GM12878 (cell line): ENCODE measurements at regions of chr12 and their contacts with region 1.

Region 1: GRCh38 chr12:14782756-14783155 is 20.5 kb downstream of the WBP11 start:
- DNase-seq: no peak
- ATAC-seq: peak; percentile 74
- H3K4me3 ChIP-seq: no peak overlapping the region
- H3K27ac ChIP-seq: no peak overlapping the region
- H3K4me1 ChIP-seq: no peaks in the 10 kb centered on the region
- H3K27me3 ChIP-seq: no peaks in the 10 kb centered on the region
- CTCF ChIP-seq: no peak
- EP300 ChIP-seq: no peak
- POLR2A ChIP-seq: no peak
- RAD21 ChIP-seq: no peak

Region 2: DNA sequence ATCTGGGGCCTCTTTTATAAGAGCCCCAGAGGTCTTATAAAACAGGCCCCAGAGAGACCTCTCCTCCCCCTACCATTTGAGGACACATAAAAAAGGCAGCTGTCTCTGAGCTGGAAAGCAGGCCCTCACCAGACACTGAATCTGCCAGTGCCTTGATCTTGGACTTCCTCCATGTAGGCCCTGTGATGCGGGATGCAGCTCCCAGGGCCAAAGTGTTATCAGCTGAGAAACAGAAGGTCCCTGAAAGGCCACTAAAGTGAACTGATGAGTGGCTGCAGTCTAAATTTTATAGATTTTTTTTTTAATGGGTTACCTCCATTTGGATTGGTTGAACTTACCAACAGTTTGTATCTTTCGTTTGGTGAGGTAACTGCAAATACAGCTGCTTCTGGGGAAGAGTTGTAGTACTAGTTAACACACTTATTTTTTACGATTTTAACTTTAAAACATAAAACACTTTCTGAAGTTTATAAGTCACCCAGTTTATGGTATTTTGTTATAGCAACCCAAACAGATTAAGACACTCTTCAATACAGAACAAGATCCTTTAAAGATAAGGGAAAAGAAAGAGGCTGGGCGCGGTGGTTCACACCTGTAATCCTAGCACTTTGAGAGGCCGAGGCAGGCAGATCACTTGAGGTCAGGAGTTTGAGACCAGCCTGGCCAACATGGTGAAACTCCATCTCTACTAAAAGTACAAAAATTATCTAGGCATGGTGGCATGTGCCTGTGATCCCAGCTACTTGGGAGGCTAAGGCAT is 80.8 kb before region 1 on chr12:
- CTCF ChIA-PET with region 1: no interaction called
- POLR2A ChIA-PET with region 1: no interaction called
- RAD21 ChIA-PET with region 1: no interaction called
- SMC1A ChIA-PET with region 1: no interaction called
- in situ Hi-C with region 1: no loop called
- intact Hi-C with region 1: no loop called
- DNase-seq: no peak
- ATAC-seq: no peak
- H3K4me3 ChIP-seq: no peak overlapping the region
- H3K27ac ChIP-seq: no peak overlapping the region
- H3K4me1 ChIP-seq: no peaks in the 10 kb centered on the region
- H3K27me3 ChIP-seq: no peaks in the 10 kb centered on the region
- CTCF ChIP-seq: no peak
- EP300 ChIP-seq: no peak
- POLR2A ChIP-seq: no peak
- RAD21 ChIP-seq: no peak

Region 3: DNA sequence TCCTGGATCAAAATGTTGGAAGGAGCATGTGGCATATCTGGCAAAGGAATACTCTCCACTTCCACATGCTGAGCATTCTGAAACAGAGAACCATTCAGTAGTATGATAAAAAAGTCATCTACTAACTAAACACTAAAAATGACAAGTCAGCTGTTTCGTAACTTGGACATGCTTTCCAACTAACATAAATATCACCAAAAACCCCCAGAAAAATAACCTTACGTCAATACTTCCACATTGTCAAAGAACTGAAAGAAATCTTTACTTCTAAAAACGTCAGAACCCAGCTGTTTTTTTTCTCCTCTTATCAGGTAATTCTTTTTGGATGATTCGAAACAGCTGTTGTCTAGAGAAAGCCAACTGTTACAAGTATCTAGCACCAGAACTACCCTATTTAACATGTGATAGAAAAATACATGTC is 12.3 kb after region 1 on chr12:
- CTCF ChIA-PET with region 1: interaction called, 8 read pairs
- POLR2A ChIA-PET with region 1: interaction called, 3 read pairs
- RAD21 ChIA-PET with region 1: interaction called, 89 read pairs
- SMC1A ChIA-PET with region 1: interaction called, 13 read pairs
- in situ Hi-C with region 1: no loop called
- intact Hi-C with region 1: no loop called
- DNase-seq: no peak
- ATAC-seq: peak; percentile 65
- H3K4me3 ChIP-seq: no peak overlapping the region
- H3K27ac ChIP-seq: no peak overlapping the region
- H3K4me1 ChIP-seq: no peaks in the 10 kb centered on the region
- H3K27me3 ChIP-seq: no peaks in the 10 kb centered on the region
- CTCF ChIP-seq: no peak
- EP300 ChIP-seq: peak in 1 of 2 experiments; percentile 20; a peak in 1 of 4 replicates
- POLR2A ChIP-seq: no peak
- RAD21 ChIP-seq: no peak

Region 4: DNA sequence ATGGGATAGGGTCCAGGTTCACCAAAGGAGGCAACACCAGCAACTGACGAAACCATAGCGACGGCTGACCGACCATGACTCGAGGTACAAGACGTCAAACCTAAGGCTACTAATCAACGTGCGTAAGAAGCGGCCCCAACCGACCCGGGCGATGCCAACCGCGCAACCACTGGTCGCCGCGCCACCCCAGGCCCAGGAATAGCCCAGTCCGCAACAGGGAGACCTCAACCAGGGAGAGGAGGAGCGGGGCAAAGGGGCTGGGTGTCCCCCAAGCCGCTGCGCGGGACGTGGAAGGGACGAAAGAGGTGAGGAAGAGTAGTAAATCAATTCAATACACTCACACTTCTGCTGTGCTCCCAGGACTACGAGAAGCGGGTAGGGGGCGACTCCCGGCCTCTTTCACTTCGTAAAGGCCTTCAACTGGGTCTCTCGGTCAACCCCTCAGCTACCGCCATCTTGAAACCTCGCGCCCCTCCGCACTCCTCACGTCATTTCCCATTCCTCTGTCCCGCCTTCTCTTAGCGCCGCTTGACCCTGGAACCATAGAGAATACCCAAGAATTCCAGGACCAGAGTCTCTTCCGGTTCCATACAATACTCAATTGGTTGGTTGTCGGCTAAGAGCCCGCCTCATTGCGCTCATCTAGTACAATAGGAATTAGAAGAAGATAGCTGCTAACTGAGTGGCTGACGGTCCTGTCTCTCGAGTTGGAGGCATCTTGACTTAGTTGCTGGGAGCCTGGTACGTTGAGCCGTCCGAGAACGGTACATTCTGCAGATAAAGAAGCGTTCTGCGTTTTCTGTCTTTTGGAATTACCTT is 20.5 kb after region 1 on chr12 and contains the starts of genes C12orf60 and WBP11:
- CTCF ChIA-PET with region 1: interaction called, 7 read pairs
- POLR2A ChIA-PET with region 1: interaction called, 7 read pairs
- RAD21 ChIA-PET with region 1: interaction called, 89 read pairs
- SMC1A ChIA-PET with region 1: interaction called, 17 read pairs
- in situ Hi-C with region 1: no loop called
- intact Hi-C with region 1: no loop called
- DNase-seq: peak; percentile 98
- ATAC-seq: peak; percentile 99
- H3K4me3 ChIP-seq: peak within 1 kb of the TSS; percentile 98
- H3K27ac ChIP-seq: peak within 1 kb of the TSS; percentile 86
- H3K4me1 ChIP-seq: peaks cover 3% of the 10 kb centered on the region; the same call in 1 of the 2 replicates
- H3K27me3 ChIP-seq: no peaks in the 10 kb centered on the region
- CTCF ChIP-seq: no peak
- EP300 ChIP-seq: no peak
- POLR2A ChIP-seq: peak; percentile 80
- RAD21 ChIP-seq: no peak
- polyA plus RNA-seq, gene C12orf60: 5.7 to 7.2 TPM
- polyA plus RNA-seq, gene WBP11: 17.5 to 18.9 TPM